Breast epithelium (tissue), 4 donors: ENCODE measurements at regions of chr18 and their contacts with region 1.

Region 1: DNA sequence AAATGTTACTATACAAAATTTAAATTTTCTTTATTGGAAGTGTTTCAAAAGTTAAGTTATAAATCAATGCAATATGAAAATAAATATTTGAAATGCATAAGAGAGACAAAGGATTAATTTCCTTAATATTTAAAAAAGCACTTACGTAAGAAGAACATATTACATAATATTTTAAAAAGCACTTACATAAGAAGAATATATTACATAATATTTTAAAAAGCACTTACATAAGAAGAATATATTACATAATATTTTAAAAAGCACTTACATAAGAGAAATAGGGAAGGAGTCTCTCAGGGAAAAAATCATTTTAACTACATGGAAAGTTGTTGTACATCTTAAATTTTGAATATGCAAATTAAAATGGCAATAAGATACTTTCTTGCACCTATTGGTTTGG is 17.4 kb upstream of the B4GALT6 start:
- DNase-seq: no peak
- H3K4me3 ChIP-seq: no peak overlapping the region
- H3K27ac ChIP-seq: no peak overlapping the region
- H3K4me1 ChIP-seq: no peaks in the 10 kb centered on the region
- H3K27me3 ChIP-seq: no peaks in the 10 kb centered on the region
- CTCF ChIP-seq: no peak
- POLR2A ChIP-seq: no peak

Region 2: DNA sequence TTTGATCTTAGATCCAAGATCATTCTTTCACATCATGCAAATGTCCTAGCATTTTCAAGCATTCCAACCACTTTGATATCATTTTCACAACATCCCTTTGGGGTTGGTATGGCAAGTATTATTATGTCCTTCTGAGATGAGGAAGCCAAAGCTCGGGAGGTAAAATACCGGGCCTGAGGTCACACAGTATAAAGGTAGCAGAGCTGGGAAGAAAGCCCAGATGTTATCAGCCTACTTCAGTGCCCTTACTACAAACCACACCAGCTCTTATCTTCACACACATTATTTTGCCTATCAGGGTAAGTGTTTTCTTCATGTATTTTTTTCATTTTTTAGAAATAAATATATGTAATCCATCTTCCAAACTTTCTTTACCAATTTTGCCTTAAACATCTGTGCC is 13.1 kb before region 1 on chr18:
- intact Hi-C with region 1: loop called (anchors 1 kb)
- DNase-seq: no peak
- H3K4me3 ChIP-seq: no peak overlapping the region
- H3K27ac ChIP-seq: no peak overlapping the region
- H3K4me1 ChIP-seq: peaks cover 0 to 4% of the 10 kb centered on the region in 2 donors
- H3K27me3 ChIP-seq: no peaks in the 10 kb centered on the region
- CTCF ChIP-seq: no peak
- POLR2A ChIP-seq: no peak